ENCODE measurements at regions of chr2 and their contacts with region 1.

Region 1: GRCh38 chr2:67561457-67561965 is 164.4 kb downstream of the ETAA1 start:
- DNase-seq: peak; percentile 69
- H3K4me3 ChIP-seq: peak overlapping the region in 1 of 2 experiments; percentile 6; a peak in 2 of 4 replicates
- H3K27ac ChIP-seq: peak overlapping the region; percentile 79 to 98
- H3K4me1 ChIP-seq: peaks cover 13 to 20% of the 10 kb centered on the region in 2 experiments
- H3K27me3 ChIP-seq: no peaks in the 10 kb centered on the region
- CTCF ChIP-seq: no peak
- EP300 ChIP-seq: peak; percentile 55 to 99
- RAD21 ChIP-seq: peak; percentile 55

Region 2: DNA sequence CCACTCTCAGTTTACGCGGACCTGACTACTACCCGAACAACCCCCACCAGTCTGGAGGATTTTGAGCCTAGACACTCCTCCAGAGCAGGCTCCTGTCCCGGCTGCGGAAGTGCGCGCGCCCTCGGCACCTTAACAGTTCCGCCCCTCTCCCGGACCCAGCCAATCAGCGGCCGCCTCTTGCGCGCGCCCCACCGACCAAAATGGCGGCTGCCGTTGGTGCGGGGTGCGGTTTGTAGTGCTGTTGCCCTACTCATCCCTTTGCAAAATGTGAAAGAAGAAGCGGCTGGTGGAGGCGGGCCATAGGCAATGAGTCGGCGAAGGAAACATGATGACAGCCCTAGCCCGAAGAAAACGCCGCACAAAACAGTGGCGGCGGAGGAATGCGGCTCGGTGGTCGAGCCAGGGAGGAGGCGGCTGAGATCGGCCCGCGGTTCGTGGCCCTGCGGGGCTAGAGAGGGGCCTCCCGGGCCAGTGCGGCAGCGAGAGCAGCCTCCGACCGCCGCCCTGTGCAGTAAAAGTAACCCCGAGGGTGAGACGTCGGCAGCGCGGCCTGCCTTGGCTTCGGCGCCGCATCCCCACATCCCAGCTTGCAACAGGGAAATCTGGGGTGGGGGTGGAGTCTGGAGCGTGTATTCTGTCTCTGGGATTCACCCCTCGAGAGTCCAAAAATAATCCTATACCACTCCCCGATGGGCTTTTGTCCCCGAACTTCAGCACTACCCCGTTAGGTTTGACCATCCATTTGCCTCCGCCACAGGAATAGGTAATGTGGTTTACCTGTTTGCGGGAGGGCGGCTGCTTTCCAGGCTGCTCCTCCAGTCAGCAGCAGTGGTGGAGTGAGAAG is 164.1 kb before region 1 on chr2 and contains the start of gene ETAA1:
- CTCF ChIA-PET with region 1: interaction called, 3 read pairs
- POLR2A ChIA-PET with region 1: interaction called, 10 read pairs
- DNase-seq: peak; percentile 97
- H3K4me3 ChIP-seq: peak within 1 kb of the TSS; percentile 77 to 94
- H3K27ac ChIP-seq: peak within 1 kb of the TSS; percentile 91 to 96
- H3K4me1 ChIP-seq: peaks cover 4 to 44% of the 10 kb centered on the region in 2 experiments; a peak in 3 of 4 replicates
- H3K27me3 ChIP-seq: no peaks in the 10 kb centered on the region
- CTCF ChIP-seq: no peak
- EP300 ChIP-seq: no peak
- RAD21 ChIP-seq: peak; percentile 19; the same call in 1 of the 2 replicates
- polyA plus RNA-seq, gene ETAA1: 6.8 and 8.2 TPM in 2 replicates

Measured in SK-N-SH (cell line).